ENCODE measurements at regions of chr15 and their contacts with region 1.

Region 1: DNA sequence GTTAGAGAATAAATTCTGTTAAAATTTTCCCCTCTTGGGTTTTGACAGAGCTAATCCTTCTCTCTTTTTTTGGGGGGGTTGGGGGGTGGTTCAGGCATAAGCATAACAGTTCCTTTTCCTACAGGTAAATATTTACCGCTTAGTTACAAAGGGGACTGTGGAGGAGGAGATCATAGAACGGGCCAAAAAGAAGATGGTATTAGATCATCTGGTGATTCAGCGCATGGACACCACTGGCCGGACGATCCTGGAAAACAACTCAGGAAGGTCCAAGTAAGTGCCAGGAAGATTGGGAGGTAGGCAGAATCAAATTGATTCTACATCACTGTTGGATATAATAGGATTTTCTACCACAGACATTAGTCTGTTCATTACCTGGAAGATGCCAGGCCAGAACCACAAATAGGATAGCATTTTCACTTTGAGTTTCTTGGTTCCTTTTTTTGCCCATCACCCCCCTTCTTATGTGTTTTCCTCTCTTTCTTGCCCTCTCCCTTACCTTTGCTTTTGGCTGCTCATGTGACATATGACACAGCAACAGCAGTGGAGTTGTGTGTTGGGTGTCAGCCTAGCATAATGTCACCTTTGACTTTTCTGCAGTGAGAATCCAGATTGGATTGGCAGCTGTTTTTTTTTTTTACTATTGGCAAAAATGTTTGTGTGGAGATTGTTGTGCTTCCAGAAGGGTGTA is 79.0 kb downstream of the CHD2 start:
- DNase-seq: peak; percentile 19
- H3K4me3 Mint-ChIP-seq: no peak overlapping the region
- H3K27ac Mint-ChIP-seq: peak overlapping the region; percentile 48
- H3K4me1 Mint-ChIP-seq: peaks cover 23% of the 10 kb centered on the region
- H3K27me3 Mint-ChIP-seq: no peaks in the 10 kb centered on the region
- CTCF ChIP-seq: no peak

Region 2: GRCh38 chr15:92797168-92797951 is 181.8 kb before region 1 on chr15:
- CTCF ChIA-PET with region 1: interaction called, 3 read pairs
- intact Hi-C with region 1: loop called (anchors 1 kb)
- DNase-seq: peak; percentile 79
- H3K4me3 Mint-ChIP-seq: no peak overlapping the region
- H3K27ac Mint-ChIP-seq: peak overlapping the region; percentile 24
- H3K4me1 Mint-ChIP-seq: peaks cover 23% of the 10 kb centered on the region
- H3K27me3 Mint-ChIP-seq: no peaks in the 10 kb centered on the region
- CTCF ChIP-seq: peak; percentile 31

Region 3: GRCh38 chr15:92942706-92943105 is 36.5 kb before region 1 on chr15:
- CTCF ChIA-PET with region 1: no interaction called
- intact Hi-C with region 1: loop called (anchors 5 kb)
- DNase-seq: no peak
- H3K4me3 Mint-ChIP-seq: no peak overlapping the region
- H3K27ac Mint-ChIP-seq: peak overlapping the region; percentile 6
- H3K4me1 Mint-ChIP-seq: peaks cover 19% of the 10 kb centered on the region
- H3K27me3 Mint-ChIP-seq: no peaks in the 10 kb centered on the region
- CTCF ChIP-seq: no peak

Region 4: DNA sequence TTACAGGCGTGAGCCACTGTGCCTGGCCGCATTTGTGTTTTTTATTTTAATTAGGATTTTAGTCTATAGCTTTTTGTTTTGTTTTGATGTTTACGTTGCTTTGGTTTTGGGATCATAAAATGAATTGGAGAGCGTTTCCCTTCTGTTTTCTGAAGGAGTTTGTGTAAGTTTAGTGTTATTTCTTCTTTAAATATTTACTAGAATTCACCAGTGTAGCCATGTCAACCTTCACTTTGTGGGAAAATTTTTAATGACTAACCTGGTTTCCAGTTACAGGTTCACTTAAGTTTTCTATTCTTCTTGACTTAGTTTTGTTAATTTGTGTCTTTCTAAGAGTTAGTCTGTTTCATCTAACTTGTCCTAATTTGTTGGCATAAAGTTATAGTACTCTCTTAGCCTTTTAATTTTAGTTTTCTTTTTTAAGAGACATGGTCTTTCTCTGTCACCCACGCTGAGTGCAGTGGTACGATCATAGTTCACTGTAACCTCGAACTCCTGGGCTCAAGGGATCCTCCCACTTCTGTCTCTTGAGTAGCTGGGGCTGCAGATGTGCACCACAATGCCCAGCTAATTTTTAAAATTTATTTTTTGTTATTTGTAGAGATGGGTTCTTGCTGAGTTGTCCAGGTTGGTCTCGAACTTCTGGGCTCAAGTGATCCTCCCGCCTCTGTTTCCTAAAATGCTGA is 18.0 kb before region 1 on chr15:
- CTCF ChIA-PET with region 1: interaction called, 3 read pairs
- intact Hi-C with region 1: loop called (anchors 2 kb)
- DNase-seq: no peak
- H3K4me3 Mint-ChIP-seq: no peak overlapping the region
- H3K27ac Mint-ChIP-seq: no peak overlapping the region
- H3K4me1 Mint-ChIP-seq: peaks cover 14% of the 10 kb centered on the region
- H3K27me3 Mint-ChIP-seq: no peaks in the 10 kb centered on the region
- CTCF ChIP-seq: no peak

Region 5: GRCh38 chr15:93048759-93049161 is 69.6 kb after region 1 on chr15:
- CTCF ChIA-PET with region 1: no interaction called
- intact Hi-C with region 1: no loop called
- DNase-seq: no peak
- H3K4me3 Mint-ChIP-seq: no peak overlapping the region
- H3K27ac Mint-ChIP-seq: no peak overlapping the region
- H3K4me1 Mint-ChIP-seq: no peaks in the 10 kb centered on the region
- H3K27me3 Mint-ChIP-seq: peaks cover 65% of the 10 kb centered on the region
- CTCF ChIP-seq: no peak

Region 6: GRCh38 chr15:93703092-93703739 is 724.1 kb after region 1 on chr15:
- CTCF ChIA-PET with region 1: no interaction called
- intact Hi-C with region 1: no loop called
- DNase-seq: no peak
- H3K4me3 Mint-ChIP-seq: no peak overlapping the region
- H3K27ac Mint-ChIP-seq: no peak overlapping the region
- H3K4me1 Mint-ChIP-seq: no peaks in the 10 kb centered on the region
- H3K27me3 Mint-ChIP-seq: no peaks in the 10 kb centered on the region
- CTCF ChIP-seq: no peak